Psoas muscle (tissue), 8 donors: ENCODE measurements at regions of chr22 and their contacts with region 1.

Region 1: DNA sequence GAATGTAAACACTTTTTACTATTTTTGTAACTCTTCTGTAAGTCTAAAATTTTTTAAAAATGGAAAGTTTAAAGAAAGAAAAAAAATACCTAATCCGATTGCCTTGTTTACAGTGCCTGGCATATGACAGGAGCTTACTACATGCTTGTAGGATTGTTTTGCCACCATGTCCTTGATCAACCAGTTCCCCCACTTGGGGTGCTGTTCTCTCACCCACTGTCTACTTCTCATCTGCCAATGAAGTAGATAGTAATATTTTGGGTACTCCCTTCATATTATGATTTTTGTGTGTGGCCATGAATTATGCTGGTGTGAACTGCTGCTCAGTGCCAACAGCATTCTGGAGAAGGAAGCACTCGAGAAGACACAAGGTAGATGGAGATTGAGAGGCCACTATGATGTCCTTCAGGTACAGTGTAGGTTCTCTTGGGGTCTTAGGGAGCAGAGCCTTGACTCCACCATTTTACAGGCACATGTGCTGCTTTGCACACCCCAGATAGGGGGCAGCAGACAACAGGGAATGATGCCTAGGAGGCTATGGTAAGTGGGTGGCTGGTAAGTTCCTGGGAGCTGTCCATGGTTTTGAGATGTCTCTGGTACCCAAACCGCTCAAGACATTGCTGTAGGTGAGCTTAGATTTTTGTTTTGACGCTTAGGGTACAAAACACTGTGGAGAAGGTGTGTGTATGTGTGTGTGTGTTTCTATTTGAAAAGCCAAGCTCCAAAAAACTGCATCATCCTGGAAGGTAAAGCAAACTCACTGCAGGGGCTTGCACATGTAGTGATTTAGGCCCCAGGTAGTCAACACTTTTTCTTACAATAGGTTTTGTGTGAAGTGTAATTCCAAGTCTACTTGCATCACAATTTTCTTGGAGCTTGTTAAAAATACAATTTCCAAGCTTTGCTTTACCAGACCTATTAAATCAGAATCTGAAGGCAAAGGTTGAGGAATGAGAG is 494.5 kb upstream of the LARGE1 start:
- DNase-seq: no peak
- ATAC-seq: no peak
- H3K4me3 ChIP-seq: no peak overlapping the region
- H3K27ac ChIP-seq: no peak overlapping the region
- H3K4me1 ChIP-seq: no peaks in the 10 kb centered on the region
- H3K27me3 ChIP-seq: no peaks in the 10 kb centered on the region
- CTCF ChIP-seq: no peak

Region 2: DNA sequence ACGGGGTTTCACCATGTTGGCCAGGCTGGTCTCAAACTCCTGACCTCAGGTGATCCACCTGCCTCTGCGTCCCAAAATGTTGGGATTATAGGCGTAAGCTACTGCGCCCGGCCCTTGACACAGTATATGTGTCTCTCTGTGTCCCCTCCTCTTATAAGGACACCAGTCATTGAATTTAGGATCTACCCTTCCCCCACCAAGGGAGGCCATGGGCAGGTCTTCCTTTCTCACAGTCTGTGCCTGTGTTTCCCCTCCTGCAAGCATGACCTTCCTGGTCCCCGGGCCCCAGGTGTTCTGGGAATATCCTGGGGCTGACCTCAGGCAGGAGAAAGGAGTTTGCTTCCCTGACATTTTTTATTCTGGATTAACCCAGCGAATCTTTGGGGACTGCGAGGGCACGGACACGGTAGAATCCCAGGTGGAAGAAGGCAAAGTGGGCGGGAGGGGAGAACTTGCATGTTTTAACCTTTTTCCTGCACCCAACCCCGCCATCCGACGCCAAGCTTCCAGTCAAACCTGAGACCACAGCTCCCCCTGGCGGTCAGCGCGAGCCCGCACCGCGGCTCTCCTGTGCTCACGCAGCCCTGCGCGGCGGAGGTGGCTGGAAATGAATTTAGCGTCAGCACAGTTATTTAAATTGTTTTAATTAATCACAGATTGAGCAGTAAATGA is 609.1 kb after region 1 on chr22:
- intact Hi-C with region 1: loop called in 1 of 2 experiments (anchors 10 kb)
- DNase-seq: peak; percentile 41 to 66
- ATAC-seq: no peak
- H3K4me3 ChIP-seq: no peak overlapping the region
- H3K27ac ChIP-seq: no peak overlapping the region
- H3K4me1 ChIP-seq: no peaks in the 10 kb centered on the region
- H3K27me3 ChIP-seq: peaks cover 0 to 6% (median 0%) of the 10 kb centered on the region in 3 donors
- CTCF ChIP-seq: peak; percentile 65